ENCODE measurements at regions of chr7 and their contacts with region 1.

Region 1: DNA sequence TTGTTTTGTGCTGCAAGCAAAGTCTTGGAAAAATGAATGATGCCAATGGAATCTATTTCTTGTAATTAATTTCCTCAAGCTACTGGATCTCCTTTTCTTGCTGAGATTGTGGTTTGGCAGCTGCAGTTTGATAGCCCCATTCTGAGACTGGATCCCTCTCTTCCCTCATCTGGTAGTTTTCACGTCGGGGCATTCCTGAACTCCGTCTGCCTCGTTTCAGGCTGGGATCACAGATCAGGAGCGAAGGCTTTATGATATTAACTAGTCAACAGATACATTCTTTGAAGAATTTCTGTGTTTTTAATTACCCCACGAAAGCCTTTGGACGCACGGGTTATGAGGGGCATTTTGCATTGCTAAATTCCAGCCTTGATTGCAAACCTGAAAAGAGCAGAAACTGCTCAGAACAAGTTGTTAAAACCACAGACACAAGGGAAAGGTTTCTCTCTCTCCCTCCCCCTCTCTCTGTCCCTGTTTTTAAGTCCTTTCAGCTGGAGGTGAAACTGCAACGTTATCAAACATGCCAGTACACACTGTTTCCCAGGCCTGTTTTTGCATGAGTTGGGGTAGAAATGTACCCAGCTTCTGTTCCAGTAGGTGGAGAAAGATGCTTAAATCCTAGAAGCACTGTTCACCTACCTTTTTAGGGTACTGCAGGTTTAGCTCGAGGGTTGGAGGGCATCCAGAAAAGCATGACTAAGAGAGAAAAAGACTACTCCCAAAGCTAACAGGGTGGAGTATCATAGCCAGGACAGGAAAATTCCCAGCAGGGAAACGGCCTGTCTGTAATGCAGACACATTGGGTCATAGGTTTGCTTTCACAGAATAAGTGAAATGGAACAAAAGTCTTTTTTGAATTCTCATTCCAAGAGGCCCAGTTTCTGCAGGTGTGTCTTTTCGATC is 124.3 kb downstream of the CUX1 start:
- DNase-seq: peak; percentile 78 to 80
- H3K4me3 ChIP-seq: no peak overlapping the region
- H3K27ac ChIP-seq: peak overlapping the region; percentile 83 to 97 (median 93)
- H3K4me1 ChIP-seq: peaks cover 47 to 54% of the 10 kb centered on the region in 2 donors
- H3K27me3 ChIP-seq: no peaks in the 10 kb centered on the region
- CTCF ChIP-seq: peak in 3 of 6 experiments; percentile 6 to 25 (median 22)
- POLR2A ChIP-seq: peak in 1 of 2 donors; percentile 5

Region 2: DNA sequence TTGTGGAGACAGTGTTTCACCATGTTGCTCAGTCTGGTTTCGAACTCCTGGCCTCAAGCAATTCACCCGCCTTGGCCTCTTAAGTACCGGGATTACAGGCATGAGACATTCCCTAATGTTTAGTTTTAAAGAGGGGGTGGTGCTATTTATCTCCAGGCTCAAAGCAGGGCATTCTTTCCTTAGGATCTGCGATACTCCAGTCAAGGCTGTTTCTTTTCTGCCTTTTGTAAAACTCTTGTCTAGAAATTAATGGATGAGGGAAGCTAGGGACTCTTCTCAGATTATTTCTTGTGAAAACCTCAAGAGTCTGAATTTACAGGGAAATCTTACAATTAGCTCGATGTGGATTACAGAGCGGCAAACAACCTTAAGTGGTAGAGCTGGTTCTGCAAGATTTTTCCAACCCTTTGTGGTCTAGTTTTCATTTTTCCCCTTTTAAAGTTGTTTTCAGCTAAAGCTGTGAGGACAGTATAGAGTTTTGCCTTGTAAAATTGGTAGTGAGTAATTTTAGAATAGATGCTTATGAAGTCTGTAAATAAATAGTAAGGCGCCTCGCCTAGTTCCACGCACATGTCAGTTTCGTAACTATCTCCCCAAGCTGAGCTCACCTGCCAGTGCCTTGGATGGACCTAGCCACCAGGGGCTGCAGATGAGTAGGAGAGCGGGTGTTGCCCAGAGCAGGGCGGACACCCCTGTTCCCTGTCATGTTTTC is 71.2 kb before region 1 on chr7:
- intact Hi-C with region 1: loop called (anchors 10 kb)
- DNase-seq: peak in 1 of 2 donors; percentile 46
- H3K4me3 ChIP-seq: no peak overlapping the region
- H3K27ac ChIP-seq: peak overlapping the region; percentile 60 to 83 (median 74)
- H3K4me1 ChIP-seq: peaks cover 50 to 79% of the 10 kb centered on the region in 2 donors
- H3K27me3 ChIP-seq: no peaks in the 10 kb centered on the region
- CTCF ChIP-seq: peak in 4 of 6 experiments; percentile 24 to 39 (median 27)
- POLR2A ChIP-seq: no peak

Region 3: GRCh38 chr7:102009628-102010027 is 67.9 kb after region 1 on chr7:
- intact Hi-C with region 1: loop called (anchors 10 kb)
- DNase-seq: peak; percentile 23 to 39
- H3K4me3 ChIP-seq: no peak overlapping the region
- H3K27ac ChIP-seq: no peak overlapping the region
- H3K4me1 ChIP-seq: peaks cover 0 to 13% of the 10 kb centered on the region in 2 donors
- H3K27me3 ChIP-seq: no peaks in the 10 kb centered on the region
- CTCF ChIP-seq: no peak
- POLR2A ChIP-seq: no peak

Measured in thyroid gland (tissue), 4 donors.